Calu3 (cell line): ENCODE measurements at regions of chr18 and their contacts with region 1.

Region 1: GRCh38 chr18:23249348-23249747 is 114.1 kb downstream of the CABLES1 start:
- DNase-seq: no peak
- H3K4me3 Mint-ChIP-seq: no peak overlapping the region
- H3K27ac Mint-ChIP-seq: no peak overlapping the region
- H3K4me1 Mint-ChIP-seq: no peaks in the 10 kb centered on the region
- H3K27me3 Mint-ChIP-seq: no peaks in the 10 kb centered on the region
- CTCF ChIP-seq: no peak

Region 2: DNA sequence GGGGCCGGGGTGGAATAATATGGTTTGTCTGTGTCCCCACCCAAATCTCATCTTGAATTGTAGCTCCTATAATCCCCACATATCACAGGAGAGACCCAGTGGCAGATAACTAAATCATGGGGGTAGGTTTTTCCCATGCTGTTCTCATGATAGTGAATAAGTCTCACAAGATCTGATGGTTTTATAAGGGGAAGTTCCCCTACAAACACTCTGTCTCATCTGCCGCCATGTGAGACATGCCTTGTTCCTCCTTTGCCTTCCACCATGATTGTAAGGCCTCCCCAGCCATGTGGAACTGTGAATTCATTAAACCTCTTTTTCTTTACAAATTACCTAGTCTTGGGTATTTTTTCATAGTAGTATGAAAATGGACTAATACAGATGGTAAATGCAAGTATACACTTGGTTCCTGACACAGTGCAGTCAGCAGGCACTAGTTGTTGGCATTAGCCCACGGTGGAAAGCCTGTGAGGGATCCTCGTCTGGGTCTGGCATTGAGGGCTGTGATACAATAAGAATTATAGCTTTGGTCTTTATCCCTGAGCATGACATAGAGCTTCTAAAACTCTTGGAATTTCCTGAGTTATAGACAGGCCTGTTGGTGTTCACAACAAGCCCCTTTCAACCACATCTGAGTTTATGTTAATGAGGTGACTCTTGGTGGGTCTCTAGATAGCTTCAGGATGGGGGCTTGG is 21.8 kb after region 1 on chr18:
- CTCF ChIA-PET with region 1: no interaction called
- intact Hi-C with region 1: loop called (anchors 2 kb)
- DNase-seq: no peak
- H3K4me3 Mint-ChIP-seq: no peak overlapping the region
- H3K27ac Mint-ChIP-seq: no peak overlapping the region
- H3K4me1 Mint-ChIP-seq: no peaks in the 10 kb centered on the region
- H3K27me3 Mint-ChIP-seq: no peaks in the 10 kb centered on the region
- CTCF ChIP-seq: no peak